ENCODE measurements at regions of chr1 and their contacts with region 1.

Region 1: DNA sequence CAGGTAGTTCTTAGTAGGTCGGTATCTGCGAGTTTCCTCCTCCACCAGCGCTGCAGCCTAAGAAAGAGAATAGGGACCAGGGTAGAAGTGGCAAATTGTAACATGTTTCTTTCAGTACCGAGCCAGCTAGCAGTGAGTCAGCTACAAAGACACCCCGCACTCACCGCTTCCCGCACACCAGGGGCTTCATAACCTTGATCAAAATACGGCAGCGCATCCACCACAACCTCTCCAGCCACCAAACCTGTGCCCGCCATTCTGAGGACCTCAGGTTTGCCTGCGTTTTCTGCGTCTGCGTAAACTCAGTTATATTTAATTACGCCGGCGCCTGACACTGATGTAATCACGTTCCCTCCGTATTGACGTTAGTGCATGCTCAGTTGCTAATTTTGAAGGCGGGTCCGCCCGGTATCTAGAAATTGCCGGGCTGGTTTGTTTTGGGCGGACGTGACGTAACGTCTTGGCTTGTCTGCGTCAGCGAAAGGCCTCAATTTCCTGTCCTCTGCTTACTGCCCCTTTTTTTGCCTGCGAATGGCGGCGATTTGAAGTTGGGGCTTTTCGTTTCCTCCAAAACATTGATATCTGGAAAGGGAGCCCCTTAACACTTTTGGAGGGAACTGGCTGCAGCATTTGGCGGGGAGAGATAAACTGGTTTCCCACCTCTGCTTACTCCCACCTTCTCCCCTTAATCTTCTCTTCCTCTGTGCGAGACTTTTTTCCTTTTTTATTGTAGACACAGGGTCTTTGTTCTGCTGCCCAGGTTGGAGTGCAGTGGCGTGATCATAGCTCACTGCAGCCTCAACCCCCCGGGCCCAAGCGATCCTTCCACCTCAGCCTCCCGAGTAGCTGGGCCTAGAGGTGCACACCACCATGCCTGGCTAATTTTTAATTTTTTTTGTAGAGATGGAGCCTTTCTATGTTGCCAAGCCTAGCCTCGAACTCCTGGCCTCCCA is at the start of gene BCAS2:
- DNase-seq: peak; percentile 92 to 96
- H3K4me3 ChIP-seq: peak within 1 kb of the TSS; percentile 68
- H3K27ac ChIP-seq: peak within 1 kb of the TSS; percentile 68
- H3K4me1 ChIP-seq: peaks cover 14% of the 10 kb centered on the region
- H3K27me3 ChIP-seq: no peaks in the 10 kb centered on the region
- CTCF ChIP-seq: no peak
- total RNA-seq, gene BCAS2: 25.2 and 36.7 TPM in 2 replicates

Region 2: GRCh38 chr1:114511032-114511785 is 70.4 kb before region 1 on chr1 and contains the start of gene TRIM33:
- CTCF ChIA-PET with region 1: no interaction called
- POLR2A ChIA-PET with region 1: interaction called, 8 read pairs
- intact Hi-C with region 1: loop called (anchors 2 kb)
- DNase-seq: peak; percentile 85 to 89
- H3K4me3 ChIP-seq: peak within 1 kb of the TSS; percentile 93
- H3K27ac ChIP-seq: peak within 1 kb of the TSS; percentile 88
- H3K4me1 ChIP-seq: peaks cover 38% of the 10 kb centered on the region
- H3K27me3 ChIP-seq: no peaks in the 10 kb centered on the region
- CTCF ChIP-seq: no peak
- total RNA-seq, gene TRIM33: 30.0 and 38.7 TPM in 2 replicates

Region 3: GRCh38 chr1:114670083-114671010 is 88.7 kb after region 1 on chr1:
- CTCF ChIA-PET with region 1: no interaction called
- POLR2A ChIA-PET with region 1: interaction called, 6 read pairs
- intact Hi-C with region 1: loop called (anchors 5 kb)
- DNase-seq: peak; percentile 87 to 89
- H3K4me3 ChIP-seq: peak overlapping the region; percentile 82
- H3K27ac ChIP-seq: peak overlapping the region; percentile 56
- H3K4me1 ChIP-seq: peaks cover 15% of the 10 kb centered on the region
- H3K27me3 ChIP-seq: no peaks in the 10 kb centered on the region
- CTCF ChIP-seq: peak; percentile 49; the same call in 1 of the 2 replicates